T-cell (primary cell): ENCODE measurements at regions of chr6 and their contacts with region 1.

Region 1: DNA sequence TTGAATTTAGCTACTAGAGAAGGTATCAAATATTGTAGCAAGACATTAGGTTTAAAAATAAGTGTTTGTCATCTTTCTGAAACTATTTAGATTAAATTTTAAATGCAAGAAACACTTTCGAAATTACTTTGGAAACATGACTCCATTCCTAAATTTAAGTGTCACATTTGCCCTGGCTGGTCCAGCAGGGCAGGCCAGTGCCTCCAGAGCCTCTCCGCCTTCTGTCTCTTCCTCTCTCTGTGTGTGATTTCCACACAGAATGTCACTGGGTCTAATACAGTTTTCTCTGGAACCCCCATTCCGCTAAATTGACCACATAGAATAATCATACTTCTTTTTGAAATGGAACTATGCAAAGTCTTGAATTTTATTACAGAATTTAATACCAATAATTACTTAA is 111.5 kb downstream of the SOBP start:
- DNase-seq: no peak
- ATAC-seq: no peak
- H3K4me3 ChIP-seq: no peak overlapping the region
- H3K4me3 Mint-ChIP-seq: no peak overlapping the region
- H3K27ac ChIP-seq: no peak overlapping the region
- H3K27ac Mint-ChIP-seq: no peak overlapping the region
- H3K4me1 ChIP-seq: no peaks in the 10 kb centered on the region
- H3K4me1 Mint-ChIP-seq: no peaks in the 10 kb centered on the region
- H3K27me3 ChIP-seq: peaks cover 0 to 7% of the 10 kb centered on the region in 2 experiments
- H3K27me3 Mint-ChIP-seq: peaks cover 6 to 12% of the 10 kb centered on the region in 2 donors

Region 2: DNA sequence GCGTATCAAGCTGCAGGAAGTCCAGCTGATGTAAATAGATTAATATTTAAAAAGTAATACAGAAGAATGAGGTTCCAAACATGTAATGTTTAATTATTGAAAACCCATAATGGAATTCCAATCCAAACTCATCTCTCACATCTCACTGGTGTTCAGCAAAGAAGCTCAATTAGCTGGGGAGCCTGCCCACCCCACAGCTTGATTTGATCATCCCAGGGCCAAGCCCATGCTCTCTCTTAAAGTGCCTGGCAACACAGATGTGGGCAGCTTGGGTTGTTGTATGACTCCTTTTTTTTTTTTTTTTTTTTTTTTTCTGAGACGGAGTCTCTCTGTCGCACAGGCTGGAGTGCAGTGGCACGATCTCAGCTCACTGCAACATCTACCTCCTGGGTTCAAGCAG is 16.1 kb after region 1 on chr6:
- CTCF ChIA-PET with region 1: no interaction called
- POLR2A ChIA-PET with region 1: interaction called in 1 of 2 experiments, 15 read pairs
- DNase-seq: no peak
- ATAC-seq: no peak
- H3K4me3 ChIP-seq: no peak overlapping the region
- H3K4me3 Mint-ChIP-seq: no peak overlapping the region
- H3K27ac ChIP-seq: no peak overlapping the region
- H3K27ac Mint-ChIP-seq: peak overlapping the region in 1 of 2 donors; percentile 35
- H3K4me1 ChIP-seq: peaks cover 19 to 27% of the 10 kb centered on the region in 2 experiments
- H3K4me1 Mint-ChIP-seq: peaks cover 31 to 34% (median 32%) of the 10 kb centered on the region in 3 donors
- H3K27me3 ChIP-seq: peaks cover 0 to 2% of the 10 kb centered on the region in 2 experiments
- H3K27me3 Mint-ChIP-seq: peaks cover 0 to 2% of the 10 kb centered on the region in 2 donors